ENCODE measurements at regions of chr17 and their contacts with region 1.

Region 1: GRCh38 chr17:50087246-50087911 is 7.8 kb upstream of the PDK2 start:
- DNase-seq: no peak
- H3K4me3 ChIP-seq: no peak overlapping the region
- H3K27me3 ChIP-seq: no peaks in the 10 kb centered on the region
- CTCF ChIP-seq: peak; percentile 98

Region 2: GRCh38 chr17:50026901-50027630 is 60.3 kb before region 1 on chr17:
- CTCF ChIA-PET with region 1: interaction called, 102 read pairs
- POLR2A ChIA-PET with region 1: no interaction called
- DNase-seq: no peak
- H3K4me3 ChIP-seq: peak overlapping the region; percentile 22
- H3K27me3 ChIP-seq: no peaks in the 10 kb centered on the region
- CTCF ChIP-seq: peak; percentile 94

Region 3: DNA sequence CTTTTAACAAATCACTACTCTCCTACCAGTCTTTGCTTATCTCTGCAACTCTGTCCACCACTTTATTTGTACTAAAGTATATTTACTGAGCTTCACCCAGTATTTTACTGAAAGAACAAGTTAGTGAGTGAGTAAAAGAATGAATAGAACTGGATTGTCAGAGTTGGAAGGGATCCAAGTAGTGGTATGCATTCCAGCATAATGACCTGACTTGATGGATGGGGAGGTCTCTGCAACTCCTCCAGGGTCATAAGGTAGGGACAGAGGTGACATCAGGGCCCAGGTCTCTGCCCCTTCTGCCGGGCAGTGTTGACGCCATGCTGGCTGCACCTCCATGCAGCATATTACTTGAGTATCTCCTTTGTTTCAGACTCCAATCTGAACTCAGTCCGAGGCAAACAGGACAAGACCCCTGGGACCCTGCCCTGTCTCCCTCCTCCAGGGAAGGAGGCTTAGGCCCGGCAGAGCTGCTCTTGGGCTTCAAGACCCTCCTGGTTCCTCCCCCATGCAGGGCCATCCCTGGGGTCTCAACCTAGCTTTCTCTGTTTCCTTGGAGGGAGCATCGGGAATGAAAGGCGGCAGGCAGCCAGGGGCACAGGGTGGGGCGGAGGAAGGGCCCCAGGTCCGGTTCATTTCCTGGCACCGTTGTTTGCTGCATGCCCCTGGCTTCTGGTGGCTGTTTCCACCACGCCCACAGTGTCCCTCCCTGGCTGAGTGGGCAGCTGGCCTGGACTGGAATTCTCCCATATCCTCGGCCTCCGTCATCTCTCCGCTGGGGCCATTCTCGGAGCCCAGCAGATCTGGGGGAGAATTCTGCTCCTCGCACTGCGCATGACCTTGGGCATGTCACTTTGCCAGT is 43.9 kb before region 1 on chr17:
- CTCF ChIA-PET with region 1: interaction called, 14 read pairs
- POLR2A ChIA-PET with region 1: no interaction called
- DNase-seq: no peak
- H3K4me3 ChIP-seq: no peak overlapping the region
- H3K27me3 ChIP-seq: no peaks in the 10 kb centered on the region
- CTCF ChIP-seq: no peak

Region 4: GRCh38 chr17:50064258-50065001 is 22.9 kb before region 1 on chr17:
- CTCF ChIA-PET with region 1: interaction called, 46 read pairs
- POLR2A ChIA-PET with region 1: no interaction called
- DNase-seq: peak; percentile 86
- H3K4me3 ChIP-seq: no peak overlapping the region
- H3K27me3 ChIP-seq: no peaks in the 10 kb centered on the region
- CTCF ChIP-seq: no peak

Region 5: DNA sequence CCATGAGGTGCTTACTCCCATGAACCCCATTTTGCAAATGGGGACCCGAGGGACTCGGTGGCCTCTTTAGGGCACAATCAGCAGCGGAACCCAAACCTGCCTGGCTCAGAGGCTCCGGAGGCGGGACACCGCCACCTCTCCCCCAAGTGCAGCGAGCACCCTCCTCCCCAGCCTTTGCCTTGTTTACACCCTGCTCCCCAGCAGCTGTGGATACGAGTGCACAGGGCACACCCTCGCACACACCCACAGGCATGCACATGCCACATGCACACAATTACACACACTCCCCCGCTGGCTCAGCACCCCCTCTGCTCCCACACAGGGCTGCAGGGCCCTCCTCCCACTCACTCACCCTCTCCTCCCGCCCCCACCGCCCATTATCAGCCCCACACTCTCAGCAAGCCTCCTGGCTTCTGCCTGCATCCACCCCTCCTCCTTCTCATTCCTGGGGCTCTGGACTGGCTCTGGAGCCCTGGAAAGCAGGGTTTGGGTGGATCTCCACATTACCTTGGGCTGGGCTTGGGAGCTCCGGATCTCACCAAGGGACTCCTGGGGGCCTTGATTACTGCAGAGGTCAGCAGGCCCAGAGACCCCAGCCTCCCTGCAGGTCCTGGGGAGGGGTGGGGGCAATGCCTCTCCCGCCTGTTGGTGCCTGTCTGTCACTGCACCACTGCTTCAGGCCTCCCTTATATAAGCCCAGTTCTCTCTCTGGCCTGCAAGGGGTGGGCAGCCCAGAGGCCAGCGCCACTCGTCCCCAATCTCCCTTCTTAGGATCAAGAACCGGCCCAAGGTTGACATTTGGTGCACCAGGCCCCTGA is 14.2 kb after region 1 on chr17:
- CTCF ChIA-PET with region 1: interaction called, 15 read pairs
- POLR2A ChIA-PET with region 1: no interaction called
- DNase-seq: no peak
- H3K4me3 ChIP-seq: no peak overlapping the region
- H3K27me3 ChIP-seq: no peaks in the 10 kb centered on the region
- CTCF ChIP-seq: no peak; the same call in 1 of the 2 replicates